ENCODE measurements at regions of chr5 and their contacts with region 1.

Region 1: DNA sequence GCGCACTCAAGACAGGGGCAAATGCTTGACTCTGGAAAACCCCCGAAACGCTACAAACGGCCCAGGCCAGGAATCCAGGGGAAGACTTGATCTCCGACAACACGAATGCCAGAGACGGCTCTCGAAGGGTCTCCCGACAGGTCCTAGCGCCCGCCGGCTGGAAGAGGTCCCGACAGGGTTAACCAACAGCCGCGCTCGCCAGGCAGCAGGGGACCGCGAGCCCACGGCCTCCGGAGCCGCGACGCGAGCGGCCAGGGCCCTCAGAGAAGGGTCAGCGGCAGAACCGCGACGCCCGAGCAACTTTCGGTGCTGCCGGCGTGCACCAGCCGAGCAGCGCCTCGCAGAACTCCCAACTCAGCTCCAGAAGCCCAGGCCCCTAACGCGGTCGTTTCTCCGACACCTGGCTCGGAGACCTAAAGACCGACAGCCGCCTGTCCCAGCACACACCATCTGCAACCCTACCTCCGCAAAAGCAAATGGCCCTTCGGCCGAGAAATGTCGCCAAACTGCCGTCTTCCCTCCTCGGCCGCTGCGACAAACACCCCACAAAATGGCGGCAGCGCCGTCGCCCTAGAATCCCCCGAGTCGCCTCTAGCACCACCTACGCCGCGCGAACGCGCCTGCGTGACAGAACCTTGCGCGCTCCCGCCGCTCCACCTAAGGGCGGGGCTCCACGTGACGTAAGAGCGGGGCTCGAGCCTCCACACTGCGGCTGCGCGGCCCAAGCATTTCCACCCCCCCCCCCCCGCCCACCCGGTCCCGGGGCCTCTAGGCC is at the start of gene CLK4:
- H3K4me3 Mint-ChIP-seq: peak within 1 kb of the TSS; percentile 95
- H3K27ac Mint-ChIP-seq: peak within 1 kb of the TSS; percentile 99
- H3K4me1 Mint-ChIP-seq: peaks cover 7% of the 10 kb centered on the region
- H3K27me3 Mint-ChIP-seq: peaks cover 8% of the 10 kb centered on the region

Region 2: DNA sequence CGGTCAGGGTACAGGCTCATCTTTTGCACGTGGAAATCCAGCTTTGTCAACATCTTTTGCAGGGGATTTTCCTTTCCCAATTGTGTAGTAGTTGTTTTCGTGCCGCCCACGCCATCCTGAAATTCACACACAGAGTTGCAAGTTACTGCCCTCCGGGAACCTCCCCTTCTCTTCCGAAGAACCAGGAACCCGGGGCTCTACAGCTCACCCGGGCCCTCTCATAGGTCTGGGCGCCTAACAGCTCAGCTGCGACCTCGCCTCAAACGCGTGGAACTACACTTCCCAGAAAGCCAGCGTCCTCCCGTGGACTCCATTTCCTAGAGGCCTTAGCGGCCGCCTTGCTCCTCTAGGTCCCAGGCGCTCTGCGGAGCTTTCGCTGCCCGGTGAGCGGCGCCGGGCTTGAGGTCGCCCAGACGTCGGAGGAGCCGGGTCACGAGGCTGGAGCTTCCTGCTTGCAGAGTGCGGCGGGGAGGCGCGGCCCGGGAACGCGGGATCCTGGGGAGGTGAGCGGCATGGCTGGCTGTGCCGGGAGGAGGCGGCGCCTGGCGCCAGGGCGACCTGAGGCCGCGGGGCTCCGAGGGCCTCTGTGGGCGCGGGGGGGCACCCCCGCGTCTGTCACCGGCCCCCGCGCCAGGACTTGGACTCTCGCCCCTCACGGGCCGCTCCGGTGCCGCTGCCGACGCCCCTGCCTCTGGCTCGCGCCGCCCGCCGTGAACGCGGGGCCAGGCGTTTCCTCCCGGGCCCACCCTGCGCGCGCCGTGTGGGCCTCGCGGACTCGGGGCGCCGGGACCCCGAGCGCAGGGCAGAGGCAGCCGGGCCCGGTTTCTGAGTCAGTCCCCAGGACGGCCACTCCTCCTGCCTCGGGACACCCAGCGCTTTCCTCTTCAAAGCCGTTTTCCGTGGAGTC is 233.2 kb after region 1 on chr5 and contains the start of gene ZNF354B:
- intact Hi-C with region 1: loop called (anchors 2 kb)
- H3K4me3 Mint-ChIP-seq: peak within 1 kb of the TSS; percentile 90
- H3K27ac Mint-ChIP-seq: peak within 1 kb of the TSS; percentile 87
- H3K4me1 Mint-ChIP-seq: peaks cover 21% of the 10 kb centered on the region
- H3K27me3 Mint-ChIP-seq: no peaks in the 10 kb centered on the region